ENCODE measurements at regions of chr17 and their contacts with region 1.

Region 1: GRCh38 chr17:65556014-65556909 is 5.2 kb downstream of the AXIN2 start:
- DNase-seq: peak; percentile 88
- H3K4me3 Mint-ChIP-seq: no peak overlapping the region
- H3K27ac Mint-ChIP-seq: no peak overlapping the region
- H3K4me1 Mint-ChIP-seq: peaks cover 21% of the 10 kb centered on the region
- H3K27me3 Mint-ChIP-seq: peaks cover 18% of the 10 kb centered on the region

Region 2: GRCh38 chr17:65294179-65294720 is 262.0 kb before region 1 on chr17:
- CTCF ChIA-PET with region 1: interaction called, 21 read pairs
- POLR2A ChIA-PET with region 1: no interaction called
- DNase-seq: peak; percentile 57
- H3K4me3 Mint-ChIP-seq: no peak overlapping the region
- H3K27ac Mint-ChIP-seq: no peak overlapping the region
- H3K4me1 Mint-ChIP-seq: no peaks in the 10 kb centered on the region
- H3K27me3 Mint-ChIP-seq: peaks cover 10% of the 10 kb centered on the region

Region 3: GRCh38 chr17:65459677-65460424 is 96.4 kb before region 1 on chr17:
- CTCF ChIA-PET with region 1: no interaction called
- POLR2A ChIA-PET with region 1: no interaction called
- DNase-seq: no peak
- H3K4me3 Mint-ChIP-seq: no peak overlapping the region
- H3K27ac Mint-ChIP-seq: no peak overlapping the region
- H3K4me1 Mint-ChIP-seq: no peaks in the 10 kb centered on the region
- H3K27me3 Mint-ChIP-seq: peaks cover 9% of the 10 kb centered on the region

Region 4: GRCh38 chr17:65609749-65610148 is 53.5 kb after region 1 on chr17:
- CTCF ChIA-PET with region 1: no interaction called
- POLR2A ChIA-PET with region 1: no interaction called
- DNase-seq: no peak
- H3K4me3 Mint-ChIP-seq: no peak overlapping the region
- H3K27ac Mint-ChIP-seq: no peak overlapping the region
- H3K4me1 Mint-ChIP-seq: no peaks in the 10 kb centered on the region
- H3K27me3 Mint-ChIP-seq: no peaks in the 10 kb centered on the region